ENCODE measurements at regions of chr20 and their contacts with region 1.

Region 1: DNA sequence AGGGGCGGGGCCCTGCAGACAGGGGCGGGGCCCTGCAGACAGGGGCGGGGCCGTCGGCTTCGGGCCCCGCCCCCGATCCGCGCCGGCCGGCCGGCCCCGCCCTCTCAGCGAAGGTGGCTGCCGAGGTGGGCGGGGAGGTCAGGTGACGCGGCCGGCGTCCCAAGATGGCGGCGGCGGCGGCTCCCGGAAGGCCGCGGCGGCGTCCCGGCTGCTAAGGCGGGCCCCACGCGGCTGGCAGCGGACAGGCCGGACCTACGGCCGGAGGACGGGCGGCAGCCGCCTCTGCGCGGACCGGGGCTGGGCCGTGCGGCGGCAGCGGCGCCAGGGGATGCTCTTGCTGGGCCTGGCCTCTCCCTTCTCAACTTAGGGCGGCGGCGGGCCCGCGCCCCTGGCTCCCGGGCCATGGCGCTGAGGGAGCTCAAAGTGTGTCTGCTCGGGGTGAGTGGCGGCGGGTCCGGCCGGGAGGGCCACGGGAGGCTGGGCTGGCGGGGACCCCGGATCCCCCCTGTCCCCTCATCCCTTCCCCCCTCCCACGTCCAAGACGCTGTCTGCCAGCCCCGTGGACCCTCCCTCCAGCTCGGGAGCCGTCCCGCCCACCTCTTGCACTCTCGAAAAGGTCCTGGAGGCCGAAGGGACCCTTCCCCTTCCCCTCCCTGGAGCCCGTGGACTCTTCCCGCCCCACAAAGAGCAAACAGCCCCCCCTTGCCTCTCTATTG is at the start of gene RAB22A:
- DNase-seq: peak; percentile 91
- ATAC-seq: peak; percentile 58
- H3K4me3 ChIP-seq: peak within 1 kb of the TSS; percentile 68 to 89 (median 78)
- H3K4me3 Mint-ChIP-seq: peak within 1 kb of the TSS; percentile 91
- H3K27ac ChIP-seq: peak within 1 kb of the TSS; percentile 94 to 97
- H3K27ac Mint-ChIP-seq: peak within 1 kb of the TSS; percentile 96
- H3K4me1 ChIP-seq: peaks cover 47 to 54% of the 10 kb centered on the region in 2 donors
- H3K4me1 Mint-ChIP-seq: peaks cover 54% of the 10 kb centered on the region
- H3K27me3 ChIP-seq: no peaks in the 10 kb centered on the region
- H3K27me3 Mint-ChIP-seq: no peaks in the 10 kb centered on the region
- CTCF ChIP-seq: no peak
- total RNA-seq, gene RAB22A: 21.1 and 22.0 TPM in 2 replicates

Region 2: DNA sequence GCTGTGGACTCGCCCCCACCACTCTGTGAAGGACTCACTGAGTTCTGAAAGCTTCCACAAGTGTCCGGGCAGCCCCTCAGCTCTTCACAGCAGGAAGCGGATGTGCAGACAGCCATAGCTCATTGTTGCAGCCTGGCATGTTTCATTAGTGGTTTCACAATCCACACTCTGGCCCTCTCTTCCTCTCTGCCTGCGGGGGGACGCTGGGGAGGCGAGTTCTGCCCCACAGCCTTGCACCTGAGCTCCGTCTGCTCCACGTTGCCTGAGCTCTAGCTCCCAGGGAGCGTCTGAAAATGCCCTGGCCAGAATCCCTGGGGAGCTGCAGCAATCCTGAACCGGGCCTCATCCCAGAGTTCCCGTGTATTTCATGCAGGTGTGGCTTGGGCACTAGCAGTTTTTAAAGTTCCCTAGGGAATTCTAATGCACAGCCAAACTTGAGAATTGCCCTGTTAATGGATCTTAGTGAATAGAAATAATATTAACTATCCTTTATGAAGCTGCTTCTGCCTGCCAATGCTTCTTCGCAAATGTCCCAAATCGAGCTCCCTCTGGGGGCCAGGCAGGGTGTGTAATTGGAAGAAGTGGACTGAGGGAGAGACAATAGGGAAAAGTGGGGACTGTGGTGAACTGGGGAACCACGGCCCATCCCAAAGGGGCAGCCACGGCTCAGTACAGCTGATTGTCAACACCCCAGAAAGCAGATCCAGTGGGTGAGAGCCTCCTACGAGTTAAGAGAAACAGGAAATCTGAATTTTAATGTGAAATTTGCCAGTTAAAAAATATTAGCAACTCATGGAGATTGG is 836.3 kb before region 1 on chr20:
- CTCF ChIA-PET with region 1: no interaction called
- POLR2A ChIA-PET with region 1: no interaction called
- intact Hi-C with region 1: loop called (anchors 10 kb)
- DNase-seq: peak; percentile 69
- ATAC-seq: peak; percentile 52
- H3K4me3 ChIP-seq: peak overlapping the region in 2 of 5 experiments; percentile 19 to 37
- H3K4me3 Mint-ChIP-seq: peak overlapping the region; percentile 65
- H3K27ac ChIP-seq: peak overlapping the region in 1 of 2 donors; percentile 2
- H3K27ac Mint-ChIP-seq: peak overlapping the region; percentile 61
- H3K4me1 ChIP-seq: peaks cover 72 to 84% of the 10 kb centered on the region in 2 donors
- H3K4me1 Mint-ChIP-seq: peaks cover 86% of the 10 kb centered on the region
- H3K27me3 ChIP-seq: no peaks in the 10 kb centered on the region
- H3K27me3 Mint-ChIP-seq: peaks cover 4% of the 10 kb centered on the region
- CTCF ChIP-seq: no peak

Region 3: DNA sequence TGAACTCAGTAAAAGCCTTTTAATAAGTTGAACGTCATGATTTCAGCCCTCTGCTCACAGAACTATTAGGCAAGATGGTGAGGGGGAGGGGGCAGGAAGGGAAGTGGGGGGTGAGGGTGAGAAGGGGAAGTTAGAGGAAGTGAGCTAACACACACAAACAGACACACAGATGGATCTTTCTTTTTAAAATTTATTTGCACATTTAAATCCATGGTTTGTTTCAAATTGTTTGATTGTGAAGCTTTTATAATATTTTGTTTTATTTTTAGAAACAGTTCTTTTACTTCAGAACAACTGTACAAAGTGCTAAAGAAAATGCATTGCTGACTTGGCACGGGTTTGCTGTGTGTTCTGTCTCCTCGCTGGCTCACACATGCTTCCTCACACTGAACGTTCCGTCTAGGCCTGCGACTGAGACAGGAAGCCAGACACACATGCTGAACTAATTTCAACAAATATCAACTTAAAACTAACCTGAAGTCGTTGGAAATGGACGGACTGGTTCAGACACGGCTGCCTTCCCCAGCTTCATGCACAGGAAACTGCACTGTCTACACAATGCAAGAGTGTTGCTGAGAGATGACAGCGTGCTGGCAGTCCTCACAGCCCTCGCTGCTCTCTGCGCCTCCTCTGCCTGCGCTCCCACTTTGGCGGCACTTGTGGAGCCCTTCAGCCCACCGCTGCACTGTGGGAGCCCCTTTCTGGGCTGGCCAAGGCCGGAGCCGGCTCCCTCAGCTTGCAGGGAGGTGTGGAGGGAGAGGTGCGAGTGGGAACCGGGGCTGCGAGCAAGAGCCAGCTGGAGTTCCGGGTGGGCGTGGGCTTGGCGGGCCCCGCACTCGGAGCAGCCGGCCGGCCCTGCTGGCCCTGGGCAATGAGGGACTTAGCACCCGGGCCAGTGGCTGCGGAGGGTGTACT is 681.4 kb before region 1 on chr20:
- CTCF ChIA-PET with region 1: no interaction called
- POLR2A ChIA-PET with region 1: no interaction called
- intact Hi-C with region 1: loop called (anchors 1 kb)
- DNase-seq: peak; percentile 82
- ATAC-seq: peak; percentile 78
- H3K4me3 ChIP-seq: peak overlapping the region; percentile 18 to 59 (median 39)
- H3K4me3 Mint-ChIP-seq: peak overlapping the region; percentile 84
- H3K27ac ChIP-seq: peak overlapping the region; percentile 78 to 81
- H3K27ac Mint-ChIP-seq: peak overlapping the region; percentile 93
- H3K4me1 ChIP-seq: peaks cover 31 to 38% of the 10 kb centered on the region in 2 donors
- H3K4me1 Mint-ChIP-seq: peaks cover 41% of the 10 kb centered on the region
- H3K27me3 ChIP-seq: peaks cover 0 to 6% (median 2%) of the 10 kb centered on the region in 4 experiments
- H3K27me3 Mint-ChIP-seq: peaks cover 12% of the 10 kb centered on the region
- CTCF ChIP-seq: no peak

Region 4: DNA sequence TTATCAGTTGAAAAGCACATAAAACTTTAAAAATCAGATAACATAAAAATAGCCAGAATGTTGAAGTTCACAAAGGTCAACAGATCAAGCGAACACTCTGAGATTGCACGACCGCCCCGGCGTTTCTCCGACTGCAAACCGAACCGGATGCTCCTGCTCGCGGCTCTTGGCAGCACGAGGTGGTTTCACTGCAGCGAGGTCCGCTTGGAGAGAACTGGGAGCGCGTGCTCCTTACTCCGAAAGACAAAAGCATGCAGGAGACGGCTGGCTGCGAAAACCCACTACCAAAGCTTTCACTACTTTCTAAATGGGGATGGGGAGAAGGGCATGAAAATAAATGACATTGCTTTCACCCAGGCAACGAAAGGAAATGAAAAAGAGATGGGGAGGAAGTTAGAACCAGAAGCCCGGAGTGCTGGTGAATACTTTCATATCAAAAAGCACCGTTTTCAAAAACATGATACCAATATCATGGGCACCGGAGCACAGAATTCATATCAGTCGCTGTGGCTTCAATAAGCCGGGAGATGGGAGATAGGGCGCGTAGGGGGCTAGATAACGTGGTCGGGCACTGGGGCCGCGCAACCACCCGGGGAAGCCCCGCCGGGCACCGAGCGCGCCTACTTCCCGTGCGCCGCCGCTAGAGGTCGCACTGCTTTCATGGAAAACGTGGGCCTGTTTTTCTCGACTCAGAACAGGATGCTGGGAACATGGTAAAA is 73.0 kb before region 1 on chr20:
- CTCF ChIA-PET with region 1: interaction called, 5 read pairs
- POLR2A ChIA-PET with region 1: no interaction called
- intact Hi-C with region 1: loop called (anchors 1 kb)
- DNase-seq: peak; percentile 83
- ATAC-seq: peak; percentile 92
- H3K4me3 ChIP-seq: peak overlapping the region; percentile 63 to 88 (median 71)
- H3K4me3 Mint-ChIP-seq: peak overlapping the region; percentile 93
- H3K27ac ChIP-seq: peak overlapping the region; percentile 27 to 73
- H3K27ac Mint-ChIP-seq: peak overlapping the region; percentile 79
- H3K4me1 ChIP-seq: peaks cover 0 to 3% of the 10 kb centered on the region in 2 donors
- H3K4me1 Mint-ChIP-seq: peaks cover 8% of the 10 kb centered on the region
- H3K27me3 ChIP-seq: no peaks in the 10 kb centered on the region
- H3K27me3 Mint-ChIP-seq: no peaks in the 10 kb centered on the region
- CTCF ChIP-seq: peak; percentile 98

Region 5: GRCh38 chr20:58327211-58327610 is 17.5 kb after region 1 on chr20:
- CTCF ChIA-PET with region 1: no interaction called
- POLR2A ChIA-PET with region 1: no interaction called
- intact Hi-C with region 1: no loop called
- DNase-seq: no peak
- ATAC-seq: no peak
- H3K4me3 ChIP-seq: no peak overlapping the region
- H3K4me3 Mint-ChIP-seq: no peak overlapping the region
- H3K27ac ChIP-seq: no peak overlapping the region
- H3K27ac Mint-ChIP-seq: no peak overlapping the region
- H3K4me1 ChIP-seq: no peaks in the 10 kb centered on the region
- H3K4me1 Mint-ChIP-seq: peaks cover 34% of the 10 kb centered on the region
- H3K27me3 ChIP-seq: no peaks in the 10 kb centered on the region
- H3K27me3 Mint-ChIP-seq: no peaks in the 10 kb centered on the region
- CTCF ChIP-seq: no peak

Region 6: GRCh38 chr20:58388882-58389323 is 79.2 kb after region 1 on chr20 and contains the start of gene VAPB:
- CTCF ChIA-PET with region 1: interaction called, 4 read pairs
- POLR2A ChIA-PET with region 1: interaction called, 10 read pairs
- intact Hi-C with region 1: loop called (anchors 1 kb)
- DNase-seq: peak; percentile 97
- ATAC-seq: peak; percentile 96
- H3K4me3 ChIP-seq: peak within 1 kb of the TSS; percentile 60 to 86 (median 75)
- H3K4me3 Mint-ChIP-seq: peak within 1 kb of the TSS; percentile 95
- H3K27ac ChIP-seq: peak within 1 kb of the TSS; percentile 97 to 99
- H3K27ac Mint-ChIP-seq: peak within 1 kb of the TSS; percentile 94
- H3K4me1 ChIP-seq: peaks cover 18 to 21% of the 10 kb centered on the region in 2 donors
- H3K4me1 Mint-ChIP-seq: peaks cover 37% of the 10 kb centered on the region
- H3K27me3 ChIP-seq: peaks cover 0 to 3% (median 0%) of the 10 kb centered on the region in 4 experiments
- H3K27me3 Mint-ChIP-seq: peaks cover 3% of the 10 kb centered on the region
- CTCF ChIP-seq: no peak
- total RNA-seq, gene VAPB: 26.4 and 29.5 TPM in 2 replicates

Region 7: GRCh38 chr20:58650776-58651558 is 341.2 kb after region 1 on chr20 and contains the start of gene STX16:
- CTCF ChIA-PET with region 1: interaction called, 10 read pairs
- POLR2A ChIA-PET with region 1: interaction called, 6 read pairs
- intact Hi-C with region 1: loop called (anchors 1 kb)
- DNase-seq: peak; percentile 91
- ATAC-seq: peak; percentile 74
- H3K4me3 ChIP-seq: peak within 1 kb of the TSS; percentile 87 to 99 (median 94)
- H3K4me3 Mint-ChIP-seq: peak within 1 kb of the TSS; percentile 100
- H3K27ac ChIP-seq: peak within 1 kb of the TSS; percentile 84 to 95
- H3K27ac Mint-ChIP-seq: peak within 1 kb of the TSS; percentile 97
- H3K4me1 ChIP-seq: peaks cover 14 to 20% of the 10 kb centered on the region in 2 donors
- H3K4me1 Mint-ChIP-seq: peaks cover 23% of the 10 kb centered on the region
- H3K27me3 ChIP-seq: peaks cover 0 to 3% (median 0%) of the 10 kb centered on the region in 4 experiments
- H3K27me3 Mint-ChIP-seq: no peaks in the 10 kb centered on the region
- CTCF ChIP-seq: peak; percentile 75
- total RNA-seq, gene STX16: 106 and 117 TPM in 2 replicates

Region 8: GRCh38 chr20:58907399-58908137 is 597.8 kb after region 1 on chr20:
- CTCF ChIA-PET with region 1: no interaction called
- POLR2A ChIA-PET with region 1: no interaction called
- intact Hi-C with region 1: loop called (anchors 5 kb)
- DNase-seq: peak; percentile 95
- ATAC-seq: peak; percentile 84
- H3K4me3 ChIP-seq: peak overlapping the region; percentile 24 to 54 (median 33)
- H3K4me3 Mint-ChIP-seq: peak overlapping the region; percentile 85
- H3K27ac ChIP-seq: peak overlapping the region; percentile 94 to 97
- H3K27ac Mint-ChIP-seq: peak overlapping the region; percentile 94
- H3K4me1 ChIP-seq: peaks cover 24 to 37% of the 10 kb centered on the region in 2 donors
- H3K4me1 Mint-ChIP-seq: peaks cover 59% of the 10 kb centered on the region
- H3K27me3 ChIP-seq: no peaks in the 10 kb centered on the region
- H3K27me3 Mint-ChIP-seq: no peaks in the 10 kb centered on the region
- CTCF ChIP-seq: no peak